ENCODE measurements at regions of chr9 and their contacts with region 1.

Region 1: DNA sequence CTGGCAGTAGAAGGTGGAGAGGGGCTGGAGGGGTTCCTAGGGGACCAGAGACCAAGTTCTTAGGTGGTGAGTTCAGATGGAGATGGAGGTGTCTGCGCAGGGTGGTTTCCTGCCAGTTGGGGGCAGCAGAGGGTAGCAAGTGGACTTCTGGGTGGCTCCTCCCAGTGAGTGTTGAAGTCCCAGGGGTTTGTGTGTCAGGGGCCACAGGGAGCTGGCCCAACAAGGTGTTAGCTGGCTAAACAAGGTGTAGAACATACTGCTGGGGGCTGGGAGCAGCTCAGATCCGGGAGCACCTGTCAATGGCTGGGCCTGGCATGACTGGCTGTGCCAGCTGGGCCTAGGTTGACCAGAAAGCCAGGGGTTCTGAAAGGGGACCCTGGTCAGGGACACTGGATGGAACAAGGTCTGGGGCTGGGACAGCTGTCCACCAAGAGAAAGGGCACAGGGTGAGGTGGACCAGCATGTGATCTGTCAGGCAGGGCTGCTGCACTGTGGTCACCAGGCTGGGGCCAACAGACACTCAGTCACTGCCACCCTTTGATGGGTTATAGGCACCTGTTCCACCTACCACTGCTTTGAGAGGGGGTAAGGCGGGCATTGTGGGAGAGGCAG is 35.6 kb downstream of the DAB2IP start:
- DNase-seq: peak; percentile 78 to 87
- H3K4me3 ChIP-seq: no peak overlapping the region
- H3K27ac ChIP-seq: no peak overlapping the region
- H3K4me1 ChIP-seq: peaks cover 9% of the 10 kb centered on the region
- H3K27me3 ChIP-seq: no peaks in the 10 kb centered on the region
- CTCF ChIP-seq: peak; percentile 93

Region 2: DNA sequence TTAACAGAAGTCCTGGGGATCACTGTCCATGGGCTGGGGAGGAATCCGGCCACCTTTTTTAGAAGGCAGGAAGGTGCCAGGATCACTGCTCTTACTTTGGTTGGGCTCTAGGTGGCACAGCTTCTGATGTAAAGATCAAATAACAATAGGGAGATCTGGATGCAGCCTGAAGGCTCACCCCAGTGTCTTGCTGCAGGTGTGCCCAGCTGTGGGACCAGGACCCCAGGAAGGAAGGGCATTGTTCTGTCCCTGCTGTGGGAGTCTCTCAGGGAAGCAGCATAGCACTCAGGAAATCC is 34.0 kb after region 1 on chr9:
- CTCF ChIA-PET with region 1: interaction called, 16 read pairs
- POLR2A ChIA-PET with region 1: no interaction called
- intact Hi-C with region 1: loop called (anchors 1 kb)
- DNase-seq: no peak
- H3K4me3 ChIP-seq: no peak overlapping the region
- H3K27ac ChIP-seq: no peak overlapping the region
- H3K4me1 ChIP-seq: peaks cover 15% of the 10 kb centered on the region
- H3K27me3 ChIP-seq: no peaks in the 10 kb centered on the region
- CTCF ChIP-seq: peak; percentile 20; the same call in 1 of the 2 replicates

Region 3: DNA sequence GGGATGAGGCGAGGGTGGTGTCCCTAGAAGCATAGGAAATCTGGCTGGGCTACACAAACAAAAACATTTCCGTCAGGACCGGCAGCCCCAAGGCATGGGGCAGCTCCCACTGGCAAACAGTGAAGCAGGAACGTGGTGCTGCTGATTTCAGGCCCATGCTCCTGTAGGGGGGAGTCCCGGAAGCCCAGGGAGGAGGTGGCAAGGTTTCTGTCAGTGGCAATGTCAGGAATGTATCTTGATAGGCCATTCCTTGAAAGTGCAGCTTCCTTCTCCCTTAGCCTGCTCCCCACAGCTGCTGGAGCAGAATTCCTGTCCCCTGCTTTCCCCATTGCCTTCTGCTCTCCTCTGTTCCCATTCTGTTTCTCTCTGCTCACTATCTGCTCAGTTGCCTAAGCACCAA is 620.0 kb after region 1 on chr9:
- CTCF ChIA-PET with region 1: no interaction called
- POLR2A ChIA-PET with region 1: no interaction called
- intact Hi-C with region 1: no loop called
- DNase-seq: no peak
- H3K4me3 ChIP-seq: no peak overlapping the region
- H3K27ac ChIP-seq: no peak overlapping the region
- H3K4me1 ChIP-seq: no peaks in the 10 kb centered on the region
- H3K27me3 ChIP-seq: no peaks in the 10 kb centered on the region
- CTCF ChIP-seq: no peak